HepG2 (cell line): ENCODE measurements at regions of chr14 and their contacts with region 1.

Region 1: GRCh38 chr14:53953002-53953827 is 3.4 kb downstream of the BMP4 start:
- DNase-seq: peak; percentile 69
- ATAC-seq: peak; percentile 71
- H3K4me3 ChIP-seq: peak overlapping the region; percentile 87 to 92 (median 90)
- H3K27ac ChIP-seq: peak overlapping the region; percentile 85
- H3K4me1 ChIP-seq: peaks cover 60% of the 10 kb centered on the region
- H3K27me3 ChIP-seq: no peaks in the 10 kb centered on the region; a peak in 1 of 5 replicates
- CTCF ChIP-seq: no peak
- EP300 ChIP-seq: no peak
- POLR2A ChIP-seq: peak; percentile 82 to 88
- RAD21 ChIP-seq: peak; percentile 57

Region 2: DNA sequence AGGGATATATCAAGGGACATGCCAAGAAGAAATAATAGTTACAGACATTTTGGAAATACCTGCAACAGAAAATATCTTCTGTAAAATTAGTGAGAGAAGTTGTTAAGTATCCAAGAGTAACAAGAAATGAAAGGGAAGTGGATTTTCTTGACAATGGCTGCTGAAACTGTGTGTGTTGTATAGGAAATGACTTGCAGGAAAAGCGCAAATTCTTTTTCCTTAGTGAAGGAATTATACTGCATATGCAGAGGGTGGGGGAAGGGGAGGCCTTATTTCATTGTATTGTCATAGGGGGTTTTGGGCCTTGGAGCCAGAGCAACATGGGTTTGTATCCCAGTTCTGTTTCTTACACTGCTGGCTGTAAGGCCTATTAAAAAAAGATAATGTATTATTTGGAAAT is 715.7 kb before region 1 on chr14:
- CTCF ChIA-PET with region 1: no interaction called
- POLR2A ChIA-PET with region 1: no interaction called
- in situ Hi-C with region 1: no loop called
- intact Hi-C with region 1: no loop called
- DNase-seq: no peak
- ATAC-seq: no peak
- H3K4me3 ChIP-seq: no peak overlapping the region
- H3K27ac ChIP-seq: no peak overlapping the region
- H3K4me1 ChIP-seq: no peaks in the 10 kb centered on the region
- H3K27me3 ChIP-seq: no peaks in the 10 kb centered on the region
- CTCF ChIP-seq: no peak
- EP300 ChIP-seq: no peak
- POLR2A ChIP-seq: no peak
- RAD21 ChIP-seq: no peak

Region 3: GRCh38 chr14:53613404-53614253 is 339.6 kb before region 1 on chr14:
- CTCF ChIA-PET with region 1: no interaction called
- POLR2A ChIA-PET with region 1: interaction called, 22 read pairs
- in situ Hi-C with region 1: loop called (anchors 10 kb)
- intact Hi-C with region 1: loop called (anchors 5 kb)
- DNase-seq: peak; percentile 100
- ATAC-seq: peak; percentile 98
- H3K4me3 ChIP-seq: peak overlapping the region; percentile 70 to 72 (median 70)
- H3K27ac ChIP-seq: peak overlapping the region; percentile 98
- H3K4me1 ChIP-seq: peaks cover 91% of the 10 kb centered on the region
- H3K27me3 ChIP-seq: no peaks in the 10 kb centered on the region
- CTCF ChIP-seq: peak; percentile 72
- EP300 ChIP-seq: peak; percentile 94 to 97
- POLR2A ChIP-seq: peak; percentile 62 to 73; a peak in 3 of 4 replicates
- RAD21 ChIP-seq: no peak; the same call in 1 of the 2 replicates

Region 4: GRCh38 chr14:54048311-54048710 is 95.1 kb after region 1 on chr14:
- CTCF ChIA-PET with region 1: no interaction called
- POLR2A ChIA-PET with region 1: interaction called, 26 read pairs
- in situ Hi-C with region 1: no loop called
- intact Hi-C with region 1: loop called (anchors 2 kb)
- DNase-seq: peak; percentile 15
- ATAC-seq: peak; percentile 63
- H3K4me3 ChIP-seq: no peak overlapping the region; a peak in 1 of 6 replicates
- H3K27ac ChIP-seq: peak overlapping the region; percentile 79
- H3K4me1 ChIP-seq: peaks cover 63% of the 10 kb centered on the region
- H3K27me3 ChIP-seq: no peaks in the 10 kb centered on the region
- CTCF ChIP-seq: no peak
- EP300 ChIP-seq: no peak
- POLR2A ChIP-seq: no peak
- RAD21 ChIP-seq: no peak

Region 5: GRCh38 chr14:54116972-54117371 is 163.8 kb after region 1 on chr14:
- CTCF ChIA-PET with region 1: no interaction called
- POLR2A ChIA-PET with region 1: interaction called, 14 read pairs
- in situ Hi-C with region 1: no loop called
- intact Hi-C with region 1: no loop called
- DNase-seq: peak; percentile 66
- ATAC-seq: no peak
- H3K4me3 ChIP-seq: no peak overlapping the region
- H3K27ac ChIP-seq: peak overlapping the region; percentile 23
- H3K4me1 ChIP-seq: peaks cover 66% of the 10 kb centered on the region
- H3K27me3 ChIP-seq: no peaks in the 10 kb centered on the region
- CTCF ChIP-seq: no peak
- EP300 ChIP-seq: no peak
- POLR2A ChIP-seq: no peak
- RAD21 ChIP-seq: no peak

Region 6: DNA sequence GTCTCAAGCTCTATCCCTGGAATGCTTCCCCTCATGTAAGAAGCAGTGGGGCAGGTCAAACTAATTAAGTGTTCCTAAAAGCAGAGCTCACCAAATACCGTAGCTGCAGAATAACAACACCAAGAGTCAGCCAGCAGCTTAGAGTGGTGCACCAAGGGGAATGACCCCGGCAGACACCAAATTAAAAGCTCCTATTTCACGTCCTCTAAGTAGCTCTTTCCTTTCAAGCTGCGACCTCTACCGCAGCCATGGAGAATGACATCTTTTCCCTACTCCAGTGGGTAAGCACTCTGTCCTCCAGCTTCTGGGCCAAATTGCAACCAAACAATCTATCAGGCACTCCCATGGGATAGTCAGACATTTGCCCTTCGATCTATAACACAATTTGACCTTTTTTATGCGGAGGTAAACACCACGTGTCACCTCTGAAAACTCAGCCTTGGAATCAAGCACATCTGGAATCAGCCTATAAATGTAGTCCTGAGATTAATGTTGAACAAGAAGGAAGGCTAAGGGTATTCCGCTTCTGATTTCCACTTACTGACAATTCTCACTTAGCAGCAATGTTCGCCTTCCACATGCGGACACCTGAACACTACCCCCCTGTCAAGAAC is 376.0 kb after region 1 on chr14:
- CTCF ChIA-PET with region 1: no interaction called
- POLR2A ChIA-PET with region 1: interaction called, 8 read pairs
- in situ Hi-C with region 1: no loop called
- intact Hi-C with region 1: loop called (anchors 2 kb)
- DNase-seq: peak; percentile 65
- ATAC-seq: peak; percentile 94
- H3K4me3 ChIP-seq: no peak overlapping the region
- H3K27ac ChIP-seq: no peak overlapping the region
- H3K4me1 ChIP-seq: peaks cover 19% of the 10 kb centered on the region
- H3K27me3 ChIP-seq: no peaks in the 10 kb centered on the region
- CTCF ChIP-seq: peak; percentile 93
- EP300 ChIP-seq: no peak
- POLR2A ChIP-seq: no peak
- RAD21 ChIP-seq: peak; percentile 86